Transverse colon (tissue), 4 donors: ENCODE measurements at regions of chr5 and their contacts with region 1.

Region 1: GRCh38 chr5:71873191-71873591 is 154.1 kb downstream of the CARTPT start:
- DNase-seq: no peak
- H3K4me3 ChIP-seq: no peak overlapping the region
- H3K27ac ChIP-seq: no peak overlapping the region
- H3K4me1 ChIP-seq: no peaks in the 10 kb centered on the region
- H3K27me3 ChIP-seq: no peaks in the 10 kb centered on the region
- CTCF ChIP-seq: no peak
- EP300 ChIP-seq: no peak
- POLR2A ChIP-seq: no peak

Region 2: GRCh38 chr5:71859515-71859914 is 13.7 kb before region 1 on chr5:
- in situ Hi-C with region 1: no loop called
- intact Hi-C with region 1: loop called (anchors 2 kb)
- DNase-seq: no peak
- H3K4me3 ChIP-seq: no peak overlapping the region
- H3K27ac ChIP-seq: no peak overlapping the region
- H3K4me1 ChIP-seq: no peaks in the 10 kb centered on the region
- H3K27me3 ChIP-seq: no peaks in the 10 kb centered on the region
- CTCF ChIP-seq: no peak
- EP300 ChIP-seq: no peak
- POLR2A ChIP-seq: no peak

Region 3: DNA sequence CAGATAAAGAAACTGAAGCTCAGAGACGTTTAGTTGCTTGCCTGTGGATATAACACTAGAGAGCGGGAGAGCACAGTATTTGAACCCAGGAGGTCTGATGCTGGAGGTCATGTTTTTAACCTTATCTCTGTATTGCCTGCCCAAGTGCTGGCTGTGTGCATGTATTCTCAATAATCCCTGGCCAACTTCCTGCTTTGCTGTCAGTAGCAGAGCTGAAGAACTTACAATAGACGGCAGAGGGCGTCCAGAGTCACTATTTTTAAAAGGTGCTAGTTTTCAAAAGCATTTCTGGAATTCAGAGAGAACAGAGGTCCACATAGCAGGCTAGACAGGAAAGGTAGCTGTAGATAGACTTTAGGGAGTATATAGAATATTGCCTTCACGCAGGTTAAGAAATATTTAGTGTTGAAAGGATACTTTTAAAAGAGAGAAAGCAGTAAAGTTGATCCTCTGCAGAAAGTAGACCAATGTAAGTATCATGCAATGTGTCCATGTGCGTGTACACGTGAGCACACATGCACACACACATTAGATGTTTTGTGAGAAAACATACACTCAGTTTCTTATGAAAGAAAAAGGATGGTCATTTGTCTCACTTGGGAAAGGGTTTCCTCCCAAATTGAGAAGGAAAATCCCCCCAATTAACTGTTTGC is 493.3 kb after region 1 on chr5:
- in situ Hi-C with region 1: no loop called
- intact Hi-C with region 1: no loop called
- DNase-seq: peak; percentile 63
- H3K4me3 ChIP-seq: no peak overlapping the region
- H3K27ac ChIP-seq: no peak overlapping the region
- H3K4me1 ChIP-seq: peaks cover 0 to 8% (median 0%) of the 10 kb centered on the region in 4 donors
- H3K27me3 ChIP-seq: no peaks in the 10 kb centered on the region
- CTCF ChIP-seq: peak; percentile 69 to 75 (median 73)
- EP300 ChIP-seq: no peak
- POLR2A ChIP-seq: no peak